ENCODE measurements at regions of chr12 and their contacts with region 1.

Region 1: DNA sequence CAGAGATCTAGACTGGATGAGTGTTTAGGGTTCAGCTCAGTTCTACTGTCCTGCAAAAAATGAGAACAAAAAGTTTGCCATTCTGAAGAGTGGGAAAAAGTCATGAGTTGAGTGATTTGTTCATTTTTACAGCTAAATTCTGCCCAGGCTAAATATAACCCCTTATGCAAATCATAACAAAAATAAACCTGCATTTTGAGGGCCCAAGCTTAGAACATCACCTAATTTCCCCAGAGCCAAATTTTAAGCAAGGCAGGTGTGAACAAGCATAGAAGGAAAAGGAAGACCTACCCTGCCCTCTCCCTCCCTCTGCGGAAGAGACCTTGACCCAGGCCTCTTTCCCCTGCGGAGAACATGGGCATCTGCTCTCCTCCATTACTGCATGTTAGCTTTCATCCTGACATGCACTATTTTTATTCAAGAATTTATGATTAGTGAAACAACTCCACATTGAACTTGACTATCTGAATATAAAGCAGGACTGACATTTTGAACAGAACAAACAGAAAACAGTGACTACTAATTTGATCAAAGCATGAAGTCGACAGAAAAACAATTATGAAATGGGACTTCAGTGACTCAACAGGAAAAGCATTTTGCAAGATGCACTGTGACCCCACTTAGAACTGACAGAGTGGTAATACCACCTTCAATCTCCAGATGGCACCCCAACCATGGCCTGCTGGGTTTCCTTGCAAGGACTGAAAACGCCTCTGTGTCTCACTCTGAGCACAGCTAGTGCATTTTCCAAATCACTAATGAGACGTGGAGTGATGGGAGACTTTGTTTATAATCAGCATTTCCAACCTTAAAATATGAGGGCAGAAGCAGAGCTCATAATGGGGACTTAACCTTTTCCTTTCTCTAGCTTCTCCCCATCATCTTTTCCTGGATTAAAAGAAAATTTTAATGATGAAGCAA is 30.9 kb upstream of the SELPLG start:
- H3K4me3 Mint-ChIP-seq: peak overlapping the region; percentile 23
- H3K27ac Mint-ChIP-seq: peak overlapping the region; percentile 82
- H3K4me1 Mint-ChIP-seq: peaks cover 51% of the 10 kb centered on the region
- H3K27me3 Mint-ChIP-seq: no peaks in the 10 kb centered on the region

Region 2: GRCh38 chr12:108701779-108702441 is 37.3 kb after region 1 on chr12:
- intact Hi-C with region 1: no loop called
- H3K4me3 Mint-ChIP-seq: peak overlapping the region; percentile 10
- H3K27ac Mint-ChIP-seq: peak overlapping the region; percentile 33
- H3K4me1 Mint-ChIP-seq: peaks cover 75% of the 10 kb centered on the region
- H3K27me3 Mint-ChIP-seq: no peaks in the 10 kb centered on the region

Region 3: DNA sequence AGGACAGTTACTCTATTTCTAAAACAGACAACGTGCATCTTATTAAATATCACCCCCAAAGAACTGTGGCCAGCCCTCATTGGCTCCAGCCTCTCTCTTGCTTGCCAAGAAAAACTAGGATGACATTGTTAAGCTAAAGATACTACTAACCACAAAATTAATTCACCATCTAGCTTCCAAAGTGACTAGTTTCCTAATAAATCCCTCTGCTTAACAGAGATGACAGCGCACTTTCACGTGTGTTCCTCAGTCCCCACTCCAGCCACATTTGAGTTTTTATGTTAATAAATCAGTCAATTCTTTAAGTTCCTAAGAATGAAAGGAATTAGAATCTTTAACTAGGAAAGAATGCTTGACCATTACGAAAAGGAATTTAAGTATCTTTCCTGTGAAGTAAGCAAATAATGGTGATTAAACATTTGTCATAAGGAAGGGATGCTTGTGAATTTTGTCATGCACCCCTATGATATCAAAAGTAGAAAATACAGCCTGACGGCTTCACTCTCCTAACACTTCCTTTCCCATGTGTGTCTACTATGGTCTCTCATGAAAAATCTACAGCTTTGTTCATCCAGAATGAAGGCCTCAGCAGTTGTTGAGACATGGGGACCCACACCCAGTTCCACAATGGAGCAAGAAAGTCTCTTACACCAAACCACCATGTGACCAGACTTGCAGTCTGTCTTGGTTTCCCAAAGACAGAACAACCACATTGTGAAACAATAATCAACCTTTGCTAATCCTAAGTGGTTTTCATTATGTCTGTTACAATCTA is 58.6 kb after region 1 on chr12:
- intact Hi-C with region 1: loop called (anchors 5 kb)
- H3K4me3 Mint-ChIP-seq: peak overlapping the region; percentile 20
- H3K27ac Mint-ChIP-seq: peak overlapping the region; percentile 88
- H3K4me1 Mint-ChIP-seq: peaks cover 86% of the 10 kb centered on the region
- H3K27me3 Mint-ChIP-seq: no peaks in the 10 kb centered on the region

Measured in dendritic cell treated with granulocyte-macrophage colony-stimulating factor and Interleukin-4, amounts not matched to agents 40 ng/mL and 50 ng/mL, for 4 days (primary cell).